A549 (cell line): ENCODE measurements at regions of chr11 and their contacts with region 1.

Region 1: GRCh38 chr11:17389211-17389956 is 925 bp upstream of the KCNJ11 start:
- DNase-seq: peak; percentile 70 to 76
- ATAC-seq: peak; percentile 66 to 73
- H3K4me3 ChIP-seq: peak overlapping the region; percentile 64
- H3K27ac ChIP-seq: peak overlapping the region; percentile 80 to 85
- H3K4me1 ChIP-seq: 0 out of 3 replicates have a peak, but pooled peaks cover 3% of the 10 kb centered on the region
- CTCF ChIP-seq: peak; percentile 96
- EP300 ChIP-seq: no peak
- POLR2A ChIP-seq: no peak
- RAD21 ChIP-seq: peak; percentile 9 to 71; a peak in 3 of 5 replicates

Region 2: DNA sequence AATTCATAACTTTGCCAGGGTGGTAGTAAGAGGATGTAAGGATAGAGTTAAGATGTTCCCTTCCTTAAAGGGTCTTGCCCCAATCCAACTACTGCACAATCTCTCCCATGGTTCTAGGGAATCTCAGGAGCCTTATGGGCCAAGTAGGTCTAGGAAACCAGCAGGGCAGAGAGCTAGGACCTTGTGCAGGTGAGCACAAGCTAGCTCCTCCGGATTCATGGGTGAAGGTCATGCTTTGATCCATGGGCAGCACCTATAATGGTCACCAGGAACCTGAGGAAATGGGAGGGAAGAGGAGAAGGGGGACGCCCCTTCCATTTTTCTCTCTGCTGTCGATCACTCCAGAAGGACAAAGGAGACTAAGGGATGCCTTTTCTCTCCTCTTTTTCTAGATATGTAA is 17.8 kb before region 1 on chr11:
- CTCF ChIA-PET with region 1: interaction called, 56 read pairs
- POLR2A ChIA-PET with region 1: no interaction called
- DNase-seq: peak in 1 of 2 experiments; percentile 58
- ATAC-seq: no peak
- H3K4me3 ChIP-seq: no peak overlapping the region
- H3K27ac ChIP-seq: no peak overlapping the region
- H3K4me1 ChIP-seq: no peaks in the 10 kb centered on the region
- CTCF ChIP-seq: no peak
- EP300 ChIP-seq: no peak
- POLR2A ChIP-seq: no peak
- RAD21 ChIP-seq: no peak

Region 3: GRCh38 chr11:17405232-17406005 is 16.0 kb after region 1 on chr11:
- CTCF ChIA-PET with region 1: interaction called, 59 read pairs
- POLR2A ChIA-PET with region 1: no interaction called
- DNase-seq: peak; percentile 47 to 64
- ATAC-seq: peak; percentile 79 to 86
- H3K4me3 ChIP-seq: no peak overlapping the region; the same call in 2 of the 3 replicates
- H3K27ac ChIP-seq: peak overlapping the region; percentile 71 to 85
- H3K4me1 ChIP-seq: peaks cover 13% of the 10 kb centered on the region
- CTCF ChIP-seq: peak; percentile 26; the same call in 1 of the 3 replicates
- EP300 ChIP-seq: no peak
- POLR2A ChIP-seq: no peak
- RAD21 ChIP-seq: no peak

Region 4: DNA sequence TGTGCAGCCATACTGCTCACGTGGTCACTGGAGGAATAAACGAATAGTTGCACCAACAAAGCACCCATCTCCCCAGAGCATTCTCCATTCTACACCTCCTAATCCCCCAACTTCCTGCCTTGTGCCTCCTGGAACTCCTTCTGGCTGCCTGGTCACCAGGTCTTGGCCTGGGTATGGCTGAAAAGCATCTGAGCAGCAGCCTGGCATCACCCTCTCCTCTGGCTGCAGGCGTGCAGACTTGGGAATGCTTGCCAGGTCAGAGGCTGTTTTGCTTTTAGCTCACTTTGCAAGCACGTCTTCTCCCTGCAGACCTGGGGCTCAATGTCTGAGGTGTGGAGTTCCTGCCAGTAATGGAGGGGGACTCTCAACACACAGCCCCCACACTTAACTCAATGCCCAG is 32.4 kb after region 1 on chr11:
- CTCF ChIA-PET with region 1: interaction called, 21 read pairs
- POLR2A ChIA-PET with region 1: no interaction called
- DNase-seq: no peak
- ATAC-seq: no peak
- H3K4me3 ChIP-seq: no peak overlapping the region
- H3K27ac ChIP-seq: no peak overlapping the region
- H3K4me1 ChIP-seq: peaks cover 8% of the 10 kb centered on the region; the same call in 2 of the 3 replicates
- CTCF ChIP-seq: no peak
- EP300 ChIP-seq: no peak
- POLR2A ChIP-seq: no peak
- RAD21 ChIP-seq: no peak